ENCODE measurements at regions of chr12 and their contacts with region 1.

Region 1: GRCh38 chr12:93229494-93230325 is 148.0 kb upstream of the NUDT4 start:
- DNase-seq: peak; percentile 94
- ATAC-seq: peak; percentile 99
- H3K4me3 ChIP-seq: no peak overlapping the region
- H3K27ac ChIP-seq: peak overlapping the region; percentile 83
- H3K4me1 ChIP-seq: peaks cover 25% of the 10 kb centered on the region
- H3K27me3 ChIP-seq: no peaks in the 10 kb centered on the region
- CTCF ChIP-seq: no peak

Region 2: DNA sequence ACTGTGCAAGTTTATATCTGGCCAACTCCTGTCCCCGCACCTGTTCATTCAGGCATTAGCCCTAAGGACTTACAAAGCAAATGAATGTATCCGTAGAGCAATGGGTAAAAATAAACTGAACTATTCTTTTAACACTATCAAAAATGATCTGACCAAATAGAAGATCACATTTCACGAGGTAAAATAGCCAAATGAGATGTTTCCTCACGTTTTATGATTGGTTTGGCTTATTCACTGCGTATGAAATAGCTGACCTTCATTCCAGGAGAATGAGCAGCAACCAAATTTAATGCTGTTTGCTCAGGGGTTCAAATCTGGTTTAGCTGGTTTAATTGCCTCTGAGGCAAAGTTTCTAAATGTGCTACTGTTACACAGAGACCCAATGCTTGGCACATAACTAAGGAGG is 84.6 kb before region 1 on chr12:
- CTCF ChIA-PET with region 1: no interaction called
- POLR2A ChIA-PET with region 1: no interaction called
- intact Hi-C with region 1: loop called (anchors 1 kb)
- DNase-seq: peak; percentile 96
- ATAC-seq: peak; percentile 86
- H3K4me3 ChIP-seq: peak overlapping the region; percentile 17; the same call in 1 of the 2 replicates
- H3K27ac ChIP-seq: peak overlapping the region; percentile 55
- H3K4me1 ChIP-seq: peaks cover 27% of the 10 kb centered on the region
- H3K27me3 ChIP-seq: no peaks in the 10 kb centered on the region
- CTCF ChIP-seq: no peak

Region 3: DNA sequence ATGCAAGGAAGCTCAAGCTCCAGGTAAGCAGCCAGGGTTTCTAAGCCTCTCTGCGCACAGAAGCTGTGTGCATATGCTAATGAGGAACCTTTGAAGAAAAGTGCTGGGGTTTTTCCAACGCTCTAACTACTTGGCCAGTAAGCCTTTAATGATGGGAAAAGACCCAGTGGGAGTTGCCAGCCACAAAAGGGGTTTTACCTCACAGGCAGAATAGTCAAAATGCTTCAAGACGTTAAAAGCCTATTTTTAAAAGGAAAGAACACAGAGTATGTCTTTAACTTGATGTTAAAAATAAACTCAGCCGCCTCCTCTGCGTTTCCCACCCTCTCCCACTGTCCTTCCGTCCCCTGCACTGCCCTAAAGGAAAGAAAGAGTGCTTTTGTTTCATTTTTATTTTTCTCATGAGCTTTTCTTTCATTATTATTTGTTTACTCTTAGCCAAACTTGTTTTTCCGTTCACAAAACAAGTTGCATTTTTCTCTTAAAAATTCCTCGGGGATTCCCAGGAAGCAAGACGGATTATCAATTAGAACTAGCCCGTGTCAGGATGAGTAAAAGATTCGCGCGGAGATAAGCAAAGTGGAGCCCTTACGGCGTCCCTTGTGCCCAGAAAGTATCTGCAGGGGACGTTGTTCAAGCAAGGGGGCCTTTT is 61.7 kb before region 1 on chr12:
- CTCF ChIA-PET with region 1: no interaction called
- POLR2A ChIA-PET with region 1: no interaction called
- intact Hi-C with region 1: loop called (anchors 2 kb)
- DNase-seq: peak; percentile 43
- ATAC-seq: peak; percentile 38
- H3K4me3 ChIP-seq: peak overlapping the region; percentile 84
- H3K27ac ChIP-seq: no peak overlapping the region
- H3K4me1 ChIP-seq: peaks cover 23% of the 10 kb centered on the region
- H3K27me3 ChIP-seq: no peaks in the 10 kb centered on the region
- CTCF ChIP-seq: no peak

Region 4: GRCh38 chr12:93198086-93198485 is 31.6 kb before region 1 on chr12:
- CTCF ChIA-PET with region 1: no interaction called
- POLR2A ChIA-PET with region 1: no interaction called
- intact Hi-C with region 1: no loop called
- DNase-seq: peak; percentile 66
- ATAC-seq: peak; percentile 97
- H3K4me3 ChIP-seq: no peak overlapping the region
- H3K27ac ChIP-seq: peak overlapping the region; percentile 12; the same call in 1 of the 2 replicates
- H3K4me1 ChIP-seq: peaks cover 22% of the 10 kb centered on the region
- H3K27me3 ChIP-seq: no peaks in the 10 kb centered on the region
- CTCF ChIP-seq: no peak

Region 5: DNA sequence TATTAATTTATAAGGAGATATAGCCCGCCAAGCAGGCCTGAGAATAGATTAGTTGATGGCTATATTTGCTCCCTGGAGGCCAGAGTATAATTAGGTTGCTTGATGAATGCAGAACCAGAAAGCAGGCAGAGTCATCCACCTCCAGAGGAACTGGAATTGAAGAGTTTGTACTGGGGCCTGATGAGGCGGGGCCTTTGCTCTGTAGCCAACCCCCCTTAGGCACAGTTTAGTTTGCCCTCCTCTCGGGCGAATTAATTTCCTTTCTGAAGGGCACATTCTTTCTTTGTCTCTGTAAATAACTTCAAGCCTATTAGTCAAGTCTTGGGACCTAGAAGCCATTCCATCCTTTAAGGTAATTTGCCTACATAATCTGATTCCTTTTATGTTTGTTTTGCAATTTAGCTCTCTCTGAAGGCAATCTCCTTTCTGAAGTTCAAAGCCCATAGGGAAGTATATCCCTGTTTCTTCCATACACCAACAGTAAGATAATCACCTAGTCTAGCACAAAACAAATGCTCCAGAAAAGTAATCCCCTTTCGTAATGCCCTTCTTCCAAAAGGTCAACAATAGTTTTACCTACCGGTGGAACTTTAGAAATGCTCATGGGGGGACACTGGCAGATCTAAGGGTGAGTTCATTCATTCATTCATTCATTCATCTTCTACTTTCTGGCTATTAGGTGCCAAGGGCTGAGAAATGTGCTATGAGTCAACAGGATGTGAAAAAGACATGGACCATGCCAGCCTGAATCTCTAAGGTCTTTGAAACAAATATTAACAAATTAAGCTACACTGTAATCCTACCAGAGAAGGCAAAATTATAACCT is 63.2 kb after region 1 on chr12:
- CTCF ChIA-PET with region 1: no interaction called
- POLR2A ChIA-PET with region 1: no interaction called
- intact Hi-C with region 1: no loop called
- DNase-seq: no peak
- ATAC-seq: no peak
- H3K4me3 ChIP-seq: no peak overlapping the region
- H3K27ac ChIP-seq: no peak overlapping the region
- H3K4me1 ChIP-seq: no peaks in the 10 kb centered on the region
- H3K27me3 ChIP-seq: no peaks in the 10 kb centered on the region
- CTCF ChIP-seq: no peak

Region 6: GRCh38 chr12:93325855-93326254 is 96.1 kb after region 1 on chr12:
- CTCF ChIA-PET with region 1: no interaction called
- POLR2A ChIA-PET with region 1: no interaction called
- intact Hi-C with region 1: no loop called
- DNase-seq: peak; percentile 61
- ATAC-seq: peak; percentile 61
- H3K4me3 ChIP-seq: no peak overlapping the region
- H3K27ac ChIP-seq: no peak overlapping the region
- H3K4me1 ChIP-seq: peaks cover 29% of the 10 kb centered on the region
- H3K27me3 ChIP-seq: no peaks in the 10 kb centered on the region
- CTCF ChIP-seq: no peak

Measured in PC-3 (cell line).